ENCODE measurements at regions of chr3 and their contacts with region 1.

Region 1: GRCh38 chr3:188286087-188286513 is 132.1 kb downstream of the LPP start:
- DNase-seq: peak; percentile 42
- H3K4me3 Mint-ChIP-seq: no peak overlapping the region
- H3K27ac Mint-ChIP-seq: peak overlapping the region; percentile 34
- H3K4me1 Mint-ChIP-seq: peaks cover 51% of the 10 kb centered on the region
- H3K27me3 Mint-ChIP-seq: no peaks in the 10 kb centered on the region

Region 2: DNA sequence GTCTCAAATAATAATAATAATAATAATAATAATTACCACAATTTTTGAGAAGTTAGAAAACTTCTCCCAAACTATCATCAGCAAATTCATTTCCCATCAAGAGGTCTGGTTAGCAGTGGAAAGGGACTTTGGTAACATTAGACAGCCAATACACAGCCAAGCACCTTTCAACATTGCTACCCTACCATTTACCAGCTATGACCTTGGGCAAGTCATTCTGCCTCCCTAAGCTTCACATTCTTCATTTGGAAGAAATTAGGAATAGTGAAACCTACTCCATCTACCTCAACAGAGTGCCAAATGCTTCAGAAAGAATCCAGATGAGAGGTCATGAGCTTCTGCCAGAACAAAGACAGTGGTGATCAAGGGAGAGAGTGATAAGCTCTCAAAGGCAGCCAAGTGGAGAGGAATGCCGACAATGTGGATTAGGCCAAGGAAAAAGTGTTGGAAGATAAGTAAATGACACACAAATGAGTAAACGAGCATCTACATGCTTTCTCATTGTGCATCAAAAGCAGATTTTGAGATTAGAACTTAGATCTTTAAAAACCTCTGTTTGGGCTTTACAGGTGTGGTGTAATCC is 175.0 kb before region 1 on chr3:
- CTCF ChIA-PET with region 1: no interaction called
- POLR2A ChIA-PET with region 1: no interaction called
- intact Hi-C with region 1: no loop called
- DNase-seq: no peak
- H3K4me3 Mint-ChIP-seq: no peak overlapping the region
- H3K27ac Mint-ChIP-seq: no peak overlapping the region
- H3K4me1 Mint-ChIP-seq: peaks cover 9% of the 10 kb centered on the region
- H3K27me3 Mint-ChIP-seq: peaks cover 3% of the 10 kb centered on the region

Region 3: GRCh38 chr3:188123170-188123905 is 162.8 kb before region 1 on chr3:
- CTCF ChIA-PET with region 1: no interaction called
- POLR2A ChIA-PET with region 1: no interaction called
- intact Hi-C with region 1: loop called (anchors 2 kb)
- DNase-seq: peak; percentile 21
- H3K4me3 Mint-ChIP-seq: no peak overlapping the region
- H3K27ac Mint-ChIP-seq: peak overlapping the region; percentile 63
- H3K4me1 Mint-ChIP-seq: peaks cover 20% of the 10 kb centered on the region
- H3K27me3 Mint-ChIP-seq: peaks cover 1% of the 10 kb centered on the region

Region 4: DNA sequence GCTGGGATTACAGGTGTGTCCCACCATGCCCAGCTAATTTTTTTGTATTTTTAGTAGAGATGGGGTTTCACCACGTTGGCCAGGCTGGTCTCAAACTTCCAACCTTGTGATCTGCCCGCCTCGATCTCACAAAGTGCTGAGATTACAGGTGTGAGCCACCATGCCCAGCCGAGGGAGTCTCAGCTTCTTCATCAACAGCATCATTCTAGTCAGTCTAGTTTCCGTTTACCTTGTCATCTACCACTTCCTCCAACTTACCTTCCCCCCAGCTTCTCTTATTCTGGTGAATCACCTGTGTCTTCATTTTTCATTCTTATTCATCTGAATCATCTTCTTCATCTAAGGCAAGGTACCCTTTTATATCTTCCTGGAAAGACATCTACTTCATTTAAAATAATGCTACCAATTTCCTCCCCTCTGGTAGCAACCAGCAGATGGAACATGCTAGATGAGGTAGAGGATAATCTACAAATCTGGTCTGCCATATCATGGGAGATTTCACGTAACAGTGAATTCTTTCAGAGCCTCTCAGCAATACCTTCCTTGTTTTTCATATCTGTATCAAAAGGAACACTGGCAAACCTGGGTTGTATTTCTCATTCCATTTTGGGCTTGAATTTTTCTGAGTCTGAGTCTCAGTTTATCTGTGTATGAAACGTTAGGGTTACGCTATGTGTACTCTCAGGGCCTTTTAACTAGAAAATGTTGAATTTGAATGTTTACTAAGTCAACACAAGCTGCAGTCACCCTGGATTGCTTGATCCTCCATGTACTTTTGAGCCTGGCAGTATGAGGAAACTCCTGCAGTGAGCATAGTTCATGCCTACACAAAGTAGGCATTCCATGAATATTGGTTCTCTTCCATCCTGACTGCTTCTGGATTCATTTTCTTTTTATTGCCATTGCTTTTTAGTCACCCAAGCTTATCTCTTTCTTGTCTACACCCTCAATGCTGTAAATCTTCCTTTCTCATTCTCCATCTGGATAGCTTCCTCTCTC is 115.3 kb before region 1 on chr3:
- CTCF ChIA-PET with region 1: no interaction called
- POLR2A ChIA-PET with region 1: interaction called, 3 read pairs
- intact Hi-C with region 1: loop called (anchors 1 kb)
- DNase-seq: peak; percentile 82
- H3K4me3 Mint-ChIP-seq: peak overlapping the region; percentile 28
- H3K27ac Mint-ChIP-seq: peak overlapping the region; percentile 89
- H3K4me1 Mint-ChIP-seq: peaks cover 58% of the 10 kb centered on the region
- H3K27me3 Mint-ChIP-seq: no peaks in the 10 kb centered on the region

Region 5: DNA sequence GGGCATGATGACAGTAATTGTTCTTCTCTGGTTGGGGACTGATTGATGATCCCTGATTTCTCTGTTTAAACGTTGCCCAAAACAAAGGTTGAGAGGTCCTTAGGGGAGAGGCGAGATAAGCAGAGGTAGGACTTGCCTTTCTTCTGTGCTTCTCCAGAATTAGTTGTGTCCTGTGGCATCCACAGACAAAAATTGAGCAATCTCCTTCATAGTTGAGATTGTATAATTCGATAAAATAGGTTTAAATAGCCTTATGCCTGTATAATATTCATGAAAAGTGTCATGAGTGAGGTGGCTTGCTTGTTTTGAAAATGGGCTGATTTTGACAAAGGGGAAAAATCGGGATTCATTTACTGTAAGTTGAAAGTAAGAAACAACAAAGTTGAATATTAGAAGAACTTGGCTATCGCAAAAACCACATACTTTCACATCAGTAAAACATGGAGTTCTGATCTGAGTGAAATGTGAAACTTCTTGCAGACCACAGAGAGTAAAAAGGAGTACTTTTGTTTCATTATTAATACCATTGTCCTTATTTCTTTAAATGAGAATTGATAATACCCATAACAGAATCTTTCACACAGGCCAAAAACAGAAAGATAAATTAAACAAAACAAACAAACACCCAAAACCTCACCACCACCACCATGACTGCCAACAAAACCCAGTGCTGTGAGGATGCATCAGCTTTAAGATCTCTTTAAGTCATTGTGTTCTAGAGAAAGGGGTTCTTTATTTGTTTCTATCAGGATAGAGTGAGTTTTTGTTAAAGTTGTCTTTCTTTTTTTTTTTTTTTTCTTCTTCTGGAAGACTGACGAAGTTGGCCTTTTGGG is 23.6 kb after region 1 on chr3:
- CTCF ChIA-PET with region 1: no interaction called
- POLR2A ChIA-PET with region 1: no interaction called
- intact Hi-C with region 1: loop called (anchors 1 kb)
- DNase-seq: peak; percentile 49
- H3K4me3 Mint-ChIP-seq: peak overlapping the region; percentile 34
- H3K27ac Mint-ChIP-seq: peak overlapping the region; percentile 64
- H3K4me1 Mint-ChIP-seq: peaks cover 22% of the 10 kb centered on the region
- H3K27me3 Mint-ChIP-seq: no peaks in the 10 kb centered on the region

Region 6: DNA sequence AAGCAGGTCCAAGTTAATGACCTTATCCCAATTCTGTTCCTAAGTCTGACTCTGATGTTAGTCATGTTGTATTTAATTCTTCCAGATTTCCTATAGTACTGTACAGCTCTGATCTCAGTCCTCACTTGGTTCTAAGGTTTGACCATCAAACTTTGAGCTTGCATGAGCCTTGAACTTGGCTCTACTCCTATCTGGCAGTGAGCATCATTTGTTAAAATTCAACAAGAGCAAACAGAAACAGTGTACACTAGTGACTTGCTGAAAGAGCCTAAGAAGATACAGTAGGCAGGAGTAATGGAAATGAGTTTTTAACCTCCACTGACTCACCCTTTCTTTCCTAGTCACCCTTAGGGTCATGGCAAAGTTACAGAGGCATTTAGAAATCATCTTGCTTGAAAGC is 434.5 kb after region 1 on chr3:
- CTCF ChIA-PET with region 1: no interaction called
- POLR2A ChIA-PET with region 1: no interaction called
- intact Hi-C with region 1: loop called (anchors 1 kb)
- DNase-seq: no peak
- H3K4me3 Mint-ChIP-seq: no peak overlapping the region
- H3K27ac Mint-ChIP-seq: no peak overlapping the region
- H3K4me1 Mint-ChIP-seq: peaks cover 39% of the 10 kb centered on the region
- H3K27me3 Mint-ChIP-seq: peaks cover 12% of the 10 kb centered on the region

Measured in activated CD4-positive, alpha-beta memory T cell treated with anti-CD3 and anti-CD28 coated beads for 36 hours (primary cell).